Activated B cell treated with CpG ODN at 0.5 μM for 24 hours (primary cell): ENCODE measurements at regions of chr5 and their contacts with region 1.

Region 1: GRCh38 chr5:1167728-1168709 is 33.4 kb upstream of the SLC6A19 start:
- DNase-seq: peak; percentile 44
- ATAC-seq: peak; percentile 82
- H3K4me3 Mint-ChIP-seq: peak overlapping the region; percentile 80
- H3K27ac Mint-ChIP-seq: no peak overlapping the region
- H3K4me1 Mint-ChIP-seq: peaks cover 12% of the 10 kb centered on the region
- H3K27me3 Mint-ChIP-seq: peaks cover 10% of the 10 kb centered on the region
- CTCF ChIP-seq: peak; percentile 86

Region 2: GRCh38 chr5:923281-923873 is 244.6 kb before region 1 on chr5:
- CTCF ChIA-PET with region 1: interaction called, 19 read pairs
- POLR2A ChIA-PET with region 1: no interaction called
- intact Hi-C with region 1: loop called (anchors 1 kb)
- DNase-seq: peak; percentile 65
- ATAC-seq: peak; percentile 89
- H3K4me3 Mint-ChIP-seq: no peak overlapping the region
- H3K27ac Mint-ChIP-seq: no peak overlapping the region
- H3K4me1 Mint-ChIP-seq: no peaks in the 10 kb centered on the region
- H3K27me3 Mint-ChIP-seq: peaks cover 18% of the 10 kb centered on the region
- CTCF ChIP-seq: peak; percentile 59

Region 3: DNA sequence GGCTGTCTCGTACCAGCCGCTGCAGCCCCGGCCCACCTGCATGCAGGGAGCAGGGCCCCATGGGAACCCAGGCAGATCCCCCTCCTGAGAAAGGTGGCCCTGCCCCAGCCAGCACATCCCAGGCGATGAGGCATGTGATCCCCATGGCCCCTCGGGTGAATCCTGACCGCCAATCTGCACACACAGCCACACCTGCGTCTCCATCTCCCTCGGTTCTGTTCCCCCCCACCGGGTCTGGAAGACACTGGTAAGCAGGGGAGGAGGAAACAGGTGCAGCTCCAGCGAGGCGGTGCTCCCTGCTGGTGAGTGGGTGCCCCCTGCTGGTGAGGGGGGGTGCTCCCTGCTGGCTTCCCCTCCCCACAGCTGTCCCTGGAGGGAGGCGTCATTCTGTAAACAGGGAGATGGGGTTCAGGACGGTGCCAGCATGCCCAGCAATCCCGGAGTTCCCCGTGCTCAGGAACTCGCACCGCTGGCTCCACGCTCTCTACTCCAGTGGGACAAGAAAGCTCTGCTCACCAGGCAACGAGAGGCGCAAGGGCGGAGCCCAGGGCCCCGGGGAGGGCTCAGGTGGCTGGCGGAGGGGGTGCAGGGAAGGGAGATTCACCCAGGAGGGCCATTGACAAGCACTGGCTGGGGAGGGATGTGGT is 27.7 kb before region 1 on chr5:
- CTCF ChIA-PET with region 1: interaction called, 17 read pairs
- POLR2A ChIA-PET with region 1: no interaction called
- intact Hi-C with region 1: no loop called
- DNase-seq: peak; percentile 63
- ATAC-seq: peak; percentile 84
- H3K4me3 Mint-ChIP-seq: peak overlapping the region; percentile 55
- H3K27ac Mint-ChIP-seq: no peak overlapping the region
- H3K4me1 Mint-ChIP-seq: peaks cover 29% of the 10 kb centered on the region
- H3K27me3 Mint-ChIP-seq: peaks cover 5% of the 10 kb centered on the region
- CTCF ChIP-seq: no peak

Region 4: DNA sequence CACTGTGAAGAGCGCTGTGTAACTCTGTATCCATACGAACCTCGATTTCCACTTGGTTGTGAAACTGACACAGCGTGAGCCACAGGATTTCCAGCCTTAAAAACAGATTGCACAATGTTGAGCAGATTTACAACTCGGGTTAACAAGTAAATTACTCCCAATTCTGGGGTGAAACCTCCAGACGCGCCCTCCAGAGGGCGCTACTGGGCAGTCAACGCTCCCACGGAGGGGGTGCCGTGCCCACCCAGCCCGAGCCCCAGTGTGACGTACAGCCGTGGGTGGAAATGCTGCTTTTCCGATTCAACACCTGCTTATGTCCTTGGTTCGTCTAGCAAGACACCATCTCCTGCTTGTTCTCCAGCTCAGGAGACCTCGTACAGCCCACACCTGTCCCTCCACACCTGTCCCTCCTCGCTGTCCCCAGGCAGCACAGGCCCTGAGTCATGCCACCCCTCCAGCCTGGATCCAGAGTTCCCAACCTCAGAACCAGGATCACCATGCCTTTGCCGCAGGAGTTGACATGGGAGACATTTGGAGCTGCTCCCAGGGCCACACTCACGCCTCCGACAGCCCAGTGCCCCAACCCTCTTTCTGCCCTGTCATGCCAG is 311.7 kb after region 1 on chr5:
- CTCF ChIA-PET with region 1: no interaction called
- POLR2A ChIA-PET with region 1: no interaction called
- intact Hi-C with region 1: loop called (anchors 5 kb)
- DNase-seq: peak; percentile 68
- ATAC-seq: peak; percentile 53
- H3K4me3 Mint-ChIP-seq: peak overlapping the region; percentile 73
- H3K27ac Mint-ChIP-seq: peak overlapping the region; percentile 92
- H3K4me1 Mint-ChIP-seq: peaks cover 61% of the 10 kb centered on the region
- H3K27me3 Mint-ChIP-seq: no peaks in the 10 kb centered on the region
- CTCF ChIP-seq: no peak